ENCODE measurements at regions of chr4 and their contacts with region 1.

Region 1: DNA sequence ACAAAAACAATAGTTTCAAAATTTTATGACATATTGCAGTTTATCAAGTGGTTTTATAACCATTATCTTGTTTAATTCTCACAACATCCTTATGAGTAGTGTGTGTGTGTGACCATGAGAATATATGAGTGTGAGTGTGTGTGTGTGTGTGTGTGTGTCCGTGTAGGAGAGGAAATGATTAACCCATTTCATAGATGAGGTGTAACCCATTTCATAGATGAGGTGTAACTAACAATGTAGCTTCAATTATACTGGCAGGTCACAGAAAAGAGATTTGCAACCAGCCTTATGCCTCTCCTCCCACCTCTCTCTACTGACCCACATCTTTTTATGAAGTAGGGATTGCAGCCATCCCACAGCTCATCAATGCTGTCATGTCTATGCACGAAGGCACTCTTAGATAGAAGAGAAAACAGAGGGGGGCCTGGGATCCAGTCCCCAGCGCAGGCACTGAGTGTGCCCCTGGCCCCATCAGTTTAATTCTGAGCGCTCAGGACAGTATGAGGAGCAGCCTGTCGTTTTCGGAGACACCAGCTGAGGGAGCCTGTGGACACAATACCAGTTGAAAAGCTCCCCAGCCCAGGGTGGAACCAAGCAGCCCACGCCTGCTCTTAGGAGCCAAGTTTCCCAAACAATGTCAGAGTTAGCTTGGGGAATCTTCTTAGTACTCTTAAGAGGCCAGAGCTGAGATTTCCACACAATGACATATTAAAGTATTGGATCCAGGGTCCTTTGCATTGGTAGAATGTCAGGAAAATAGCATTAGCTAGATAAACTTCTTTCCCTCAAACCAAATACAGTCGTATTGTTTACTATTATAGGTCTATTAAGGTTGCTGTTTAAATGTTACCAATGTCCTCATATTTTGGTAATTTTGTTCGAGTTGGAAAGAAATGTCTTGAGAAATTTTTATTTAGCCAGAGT is 88.6 kb downstream of the PALLD start:
- DNase-seq: peak; percentile 78
- H3K4me3 ChIP-seq: no peak overlapping the region
- H3K27ac ChIP-seq: peak overlapping the region; percentile 43
- H3K4me1 ChIP-seq: peaks cover 48% of the 10 kb centered on the region
- H3K27me3 ChIP-seq: no peaks in the 10 kb centered on the region
- CTCF ChIP-seq: peak; percentile 85

Region 2: DNA sequence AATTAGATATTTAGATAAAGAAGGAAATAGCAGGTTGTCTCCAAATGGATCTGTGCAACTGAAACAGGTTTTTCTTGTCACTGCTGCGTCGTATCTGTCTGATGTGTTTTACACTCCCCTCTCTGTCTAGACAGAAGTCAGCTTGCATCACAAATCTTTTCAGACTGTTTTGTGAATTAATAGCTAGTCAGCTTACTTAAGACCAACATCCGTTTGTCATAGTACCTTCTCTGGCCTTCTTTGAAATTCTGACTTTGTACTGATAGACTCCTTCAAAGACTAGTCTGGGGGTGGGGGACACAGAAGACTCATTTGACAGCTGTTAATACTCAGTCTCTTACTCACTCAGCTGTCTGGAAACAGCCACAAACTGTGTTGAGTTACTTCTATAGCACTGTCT is 109.2 kb after region 1 on chr4:
- intact Hi-C with region 1: loop called (anchors 10 kb)
- DNase-seq: no peak
- H3K4me3 ChIP-seq: no peak overlapping the region
- H3K27ac ChIP-seq: peak overlapping the region; percentile 46
- H3K4me1 ChIP-seq: peaks cover 14% of the 10 kb centered on the region
- H3K27me3 ChIP-seq: no peaks in the 10 kb centered on the region
- CTCF ChIP-seq: no peak